ENCODE measurements at regions of chr5 and their contacts with region 1.

Region 1: GRCh38 chr5:146188358-146188757 is 5.9 kb upstream of the LARS1 start:
- DNase-seq: no peak
- ATAC-seq: no peak
- H3K4me3 ChIP-seq: no peak overlapping the region
- H3K27ac ChIP-seq: no peak overlapping the region
- H3K4me1 ChIP-seq: no peaks in the 10 kb centered on the region
- H3K27me3 ChIP-seq: peaks cover 0 to 2% (median 0%) of the 10 kb centered on the region in 3 donors
- CTCF ChIP-seq: no peak

Region 2: DNA sequence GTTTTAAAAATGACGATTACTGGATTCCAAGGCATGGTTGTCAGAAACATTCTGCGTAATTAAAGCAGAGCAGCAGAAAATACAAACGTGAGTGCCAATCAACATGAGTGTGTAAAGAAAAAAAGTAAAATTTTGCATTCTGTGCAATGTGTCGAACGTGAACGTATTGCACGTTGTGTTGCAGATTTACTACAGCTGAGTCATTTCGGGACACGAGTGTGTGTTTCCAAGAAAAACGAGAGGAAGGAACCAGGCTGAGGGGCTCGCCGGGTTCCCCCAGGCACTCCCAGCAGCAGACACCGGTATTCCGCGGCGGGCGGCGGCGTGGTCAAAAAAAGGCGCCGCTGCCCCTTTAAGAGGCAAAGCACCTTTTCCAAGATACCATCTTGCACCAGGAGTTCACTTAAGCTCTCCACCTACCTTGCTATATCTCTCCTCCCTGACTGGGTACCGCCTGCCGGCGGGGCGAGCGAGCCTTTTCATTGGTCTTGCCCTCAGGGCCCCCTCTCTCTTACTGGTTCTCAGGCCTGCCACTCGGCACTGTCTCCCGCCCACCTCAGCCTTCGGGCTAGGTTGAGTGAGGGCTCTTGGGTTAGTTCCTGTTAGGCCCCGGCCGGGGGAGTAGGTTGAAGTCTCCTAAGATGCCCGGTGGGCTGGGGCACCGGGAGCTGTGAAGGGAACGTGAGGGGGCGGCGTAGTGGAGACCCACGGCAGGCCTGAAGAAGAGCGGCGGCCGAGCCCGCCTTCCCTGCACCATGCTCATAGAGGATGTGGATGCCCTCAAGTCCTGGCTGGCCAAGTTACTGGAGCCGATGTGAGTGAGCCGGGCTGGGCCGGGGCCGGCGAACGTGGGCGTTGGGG is 14.9 kb after region 1 on chr5 and contains the start of gene RBM27:
- intact Hi-C with region 1: loop called (anchors 2 kb)
- DNase-seq: peak; percentile 95 to 98
- ATAC-seq: peak; percentile 100
- H3K4me3 ChIP-seq: peak within 1 kb of the TSS; percentile 69
- H3K27ac ChIP-seq: peak within 1 kb of the TSS; percentile 81
- H3K4me1 ChIP-seq: peaks cover 38% of the 10 kb centered on the region
- H3K27me3 ChIP-seq: no peaks in the 10 kb centered on the region
- CTCF ChIP-seq: no peak
- total RNA-seq, gene RBM27: 11.2 to 14.9 (median 12.8) TPM

Region 3: DNA sequence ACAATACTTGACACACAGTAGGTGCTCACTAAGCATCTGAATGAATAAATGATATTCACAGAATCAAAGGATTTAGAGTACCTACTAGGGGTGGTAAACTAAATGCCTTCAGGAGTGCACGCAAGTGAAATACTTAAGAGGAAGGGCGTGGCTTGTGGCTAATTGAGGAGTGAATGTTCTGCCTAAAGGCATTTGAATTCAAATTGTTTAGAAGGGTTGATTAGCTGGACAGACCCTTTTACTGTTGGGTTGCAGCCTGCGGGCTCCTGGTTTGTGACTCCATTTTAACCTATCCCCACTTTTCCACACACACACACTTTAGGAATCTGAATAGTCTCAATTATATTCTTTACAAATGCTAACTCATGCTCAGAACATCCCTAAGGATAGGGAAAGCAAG is 627.1 kb after region 1 on chr5:
- intact Hi-C with region 1: no loop called
- DNase-seq: no peak
- ATAC-seq: no peak
- H3K4me3 ChIP-seq: no peak overlapping the region
- H3K27ac ChIP-seq: no peak overlapping the region
- H3K4me1 ChIP-seq: no peaks in the 10 kb centered on the region
- H3K27me3 ChIP-seq: no peaks in the 10 kb centered on the region
- CTCF ChIP-seq: no peak